ENCODE measurements at regions of chr12 and their contacts with region 1.

Region 1: DNA sequence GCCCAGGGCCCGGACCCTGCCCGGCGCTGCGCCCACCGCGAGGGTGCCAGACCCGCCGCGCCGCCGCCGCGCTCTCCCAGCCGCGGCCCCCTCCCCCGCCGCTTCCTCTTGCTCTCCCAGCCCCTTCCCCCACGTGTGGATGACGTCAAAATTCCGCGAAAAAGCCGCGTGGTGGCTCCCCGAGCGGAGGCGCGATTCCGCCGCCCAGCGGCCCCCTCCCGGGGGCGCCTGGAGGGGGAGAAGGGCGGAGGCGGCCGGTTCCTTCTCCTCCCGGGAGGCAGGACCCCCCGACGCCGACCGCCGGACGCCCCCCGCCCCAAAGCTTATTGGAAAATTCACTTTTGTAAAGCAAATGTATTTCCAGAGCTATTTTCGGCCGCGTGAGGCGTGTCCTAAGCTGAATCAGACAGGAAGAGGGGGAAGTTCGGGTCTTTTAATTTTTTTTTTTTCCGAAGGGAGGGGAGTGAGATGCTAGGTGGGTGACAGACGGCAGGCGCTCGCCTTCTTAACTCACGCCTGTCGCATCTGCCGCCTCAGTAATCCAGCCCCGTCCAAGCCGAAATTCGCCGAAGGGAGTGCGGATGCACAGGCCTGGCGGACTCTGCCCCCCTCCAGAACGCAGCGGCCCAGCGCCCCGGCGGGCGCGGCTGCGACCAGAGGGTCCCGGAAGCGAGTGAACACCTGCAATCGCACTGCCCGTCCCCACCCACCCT is 4.1 kb upstream of the CCND2 start:
- DNase-seq: peak; percentile 97
- ATAC-seq: peak; percentile 15
- H3K4me3 Mint-ChIP-seq: peak overlapping the region; percentile 99
- H3K27ac Mint-ChIP-seq: peak overlapping the region; percentile 98
- H3K4me1 Mint-ChIP-seq: peaks cover 21% of the 10 kb centered on the region
- H3K27me3 Mint-ChIP-seq: peaks cover 7% of the 10 kb centered on the region

Region 2: GRCh38 chr12:4118017-4118510 is 151.4 kb before region 1 on chr12:
- CTCF ChIA-PET with region 1: interaction called, 10 read pairs
- POLR2A ChIA-PET with region 1: interaction called, 24 read pairs
- DNase-seq: peak; percentile 32
- ATAC-seq: peak; percentile 30
- H3K4me3 Mint-ChIP-seq: peak overlapping the region; percentile 55
- H3K27ac Mint-ChIP-seq: peak overlapping the region; percentile 88
- H3K4me1 Mint-ChIP-seq: peaks cover 73% of the 10 kb centered on the region
- H3K27me3 Mint-ChIP-seq: no peaks in the 10 kb centered on the region

Region 3: DNA sequence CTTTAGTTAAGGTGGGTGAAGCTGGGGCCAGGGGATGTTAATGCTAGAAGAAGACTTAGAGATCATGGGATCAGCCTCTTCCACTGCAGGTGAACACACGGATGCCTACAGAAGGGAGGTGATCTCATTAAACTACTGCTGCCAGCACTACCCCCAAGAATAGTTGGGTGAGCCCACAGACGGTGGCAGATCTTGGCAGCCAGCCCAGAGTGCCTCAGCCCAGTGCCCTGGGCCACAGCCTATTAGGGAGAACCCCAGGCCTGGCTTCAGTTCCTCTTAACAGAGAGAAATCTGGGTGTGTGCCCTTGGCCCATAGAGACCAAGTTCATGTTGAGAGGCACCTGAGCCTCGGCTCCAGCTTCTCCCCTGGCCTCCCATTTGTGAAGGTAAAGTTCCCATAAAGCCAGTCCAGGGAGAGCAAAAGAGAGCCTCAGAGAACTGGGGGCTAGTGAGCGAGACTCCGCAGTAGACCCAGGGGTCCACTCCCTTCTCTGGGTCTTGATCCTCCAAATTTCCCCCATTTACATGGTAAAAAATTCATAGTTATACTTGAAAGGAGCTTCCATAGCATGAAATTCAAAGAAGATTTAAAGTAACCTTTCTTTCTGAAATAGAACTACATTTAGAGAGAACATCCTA is 120.9 kb before region 1 on chr12:
- CTCF ChIA-PET with region 1: interaction called, 91 read pairs
- POLR2A ChIA-PET with region 1: interaction called, 260 read pairs
- DNase-seq: peak; percentile 39
- ATAC-seq: no peak
- H3K4me3 Mint-ChIP-seq: no peak overlapping the region
- H3K27ac Mint-ChIP-seq: peak overlapping the region; percentile 74
- H3K4me1 Mint-ChIP-seq: peaks cover 96% of the 10 kb centered on the region
- H3K27me3 Mint-ChIP-seq: no peaks in the 10 kb centered on the region

Region 4: DNA sequence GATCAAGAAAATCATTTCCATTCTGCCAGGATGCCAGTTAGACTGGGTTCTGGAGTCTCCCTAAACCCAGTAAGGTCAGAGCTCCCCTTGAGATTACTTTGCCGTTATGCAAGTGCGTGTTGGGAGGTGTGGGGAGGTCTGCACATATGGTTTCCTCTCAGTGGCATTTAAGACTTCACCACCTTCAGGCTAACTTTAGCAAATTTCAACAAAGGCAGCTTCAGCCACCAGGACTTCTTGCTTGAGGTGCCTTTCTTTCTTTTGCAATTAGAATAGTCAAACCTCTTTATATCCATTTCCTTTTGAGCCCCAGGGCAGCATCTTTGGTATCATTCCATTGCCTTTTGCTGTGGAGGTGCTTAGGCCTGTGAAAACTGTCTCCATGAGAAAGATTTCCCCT is 113.1 kb before region 1 on chr12:
- CTCF ChIA-PET with region 1: interaction called, 23 read pairs
- POLR2A ChIA-PET with region 1: interaction called, 78 read pairs
- DNase-seq: no peak
- ATAC-seq: no peak
- H3K4me3 Mint-ChIP-seq: no peak overlapping the region
- H3K27ac Mint-ChIP-seq: peak overlapping the region; percentile 84
- H3K4me1 Mint-ChIP-seq: peaks cover 92% of the 10 kb centered on the region
- H3K27me3 Mint-ChIP-seq: no peaks in the 10 kb centered on the region

Region 5: GRCh38 chr12:4251216-4251891 is 18.1 kb before region 1 on chr12:
- CTCF ChIA-PET with region 1: interaction called, 8 read pairs
- POLR2A ChIA-PET with region 1: interaction called, 12 read pairs
- DNase-seq: no peak
- ATAC-seq: peak; percentile 36
- H3K4me3 Mint-ChIP-seq: no peak overlapping the region
- H3K27ac Mint-ChIP-seq: peak overlapping the region; percentile 58
- H3K4me1 Mint-ChIP-seq: peaks cover 15% of the 10 kb centered on the region
- H3K27me3 Mint-ChIP-seq: peaks cover 2% of the 10 kb centered on the region

Measured in activated CD8-positive, alpha-beta T cell treated with anti-CD3 and anti-CD28 coated beads, Interleukin-2, amount 10 ng/mL, durations not matched to agents 7 days and 5 days (primary cell).